ENCODE measurements at regions of chr17 and their contacts with region 1.

Region 1: DNA sequence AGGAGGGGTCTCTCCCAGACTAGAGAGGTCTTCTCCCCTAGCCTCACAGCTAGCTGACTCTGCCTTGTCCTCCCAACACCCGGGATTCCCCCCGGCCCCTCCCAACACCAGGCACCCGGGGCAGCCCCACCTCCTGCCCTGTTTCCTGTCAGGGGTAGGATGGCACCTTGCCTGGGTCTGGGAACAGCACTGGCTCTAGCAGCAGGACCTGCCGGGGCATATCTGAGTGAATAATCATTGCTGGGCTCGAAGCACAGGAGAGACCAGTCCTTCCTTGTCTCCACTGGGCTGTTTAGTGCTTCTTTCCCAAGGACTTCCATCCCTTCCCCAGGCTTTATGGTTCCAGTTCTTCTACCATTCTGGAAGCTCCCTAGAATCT is 25.7 kb downstream of the MINK1 start:
- DNase-seq: no peak
- ATAC-seq: no peak
- H3K4me3 ChIP-seq: no peak overlapping the region
- H3K27ac ChIP-seq: peak overlapping the region; percentile 51
- H3K4me1 ChIP-seq: peaks cover 66% of the 10 kb centered on the region
- H3K27me3 ChIP-seq: no peaks in the 10 kb centered on the region
- CTCF ChIP-seq: no peak
- EP300 ChIP-seq: no peak
- POLR2A ChIP-seq: no peak
- RAD21 ChIP-seq: no peak

Region 2: DNA sequence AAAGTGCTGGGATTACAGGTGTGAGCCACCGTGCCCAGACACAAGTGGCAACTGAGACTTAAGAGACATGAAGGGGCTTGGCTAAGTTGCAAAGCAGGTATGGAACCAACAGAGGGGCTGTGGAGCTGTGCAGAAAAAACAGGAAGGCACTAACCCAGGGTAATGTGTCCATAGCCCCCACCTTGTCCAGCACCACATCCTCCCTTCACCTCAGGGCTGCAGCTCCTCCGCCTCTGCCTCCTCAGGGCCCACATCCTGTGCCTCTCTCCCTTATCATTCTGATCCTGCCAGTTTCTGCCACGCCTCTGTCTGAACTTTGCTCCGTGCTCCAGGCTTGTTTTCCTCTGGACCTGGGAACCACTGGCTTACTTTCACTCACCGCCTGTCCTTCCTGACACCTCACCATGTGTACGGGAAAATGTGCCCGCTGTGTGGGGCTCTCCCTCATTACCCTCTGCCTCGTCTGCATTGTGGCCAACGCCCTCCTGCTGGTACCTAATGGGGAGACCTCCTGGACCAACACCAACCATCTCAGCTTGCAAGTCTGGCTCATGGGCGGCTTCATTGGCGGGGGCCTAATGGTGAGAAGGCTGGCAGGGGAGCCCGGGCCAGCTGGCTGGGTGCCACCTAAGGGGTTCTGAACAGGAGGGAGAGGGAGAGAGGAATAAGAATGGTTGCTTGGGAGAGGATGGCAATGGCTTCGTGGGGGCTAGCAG is 87.2 kb before region 1 on chr17 and contains the start of gene TM4SF5:
- CTCF ChIA-PET with region 1: no interaction called
- POLR2A ChIA-PET with region 1: no interaction called
- in situ Hi-C with region 1: no loop called
- intact Hi-C with region 1: no loop called
- DNase-seq: peak; percentile 95
- ATAC-seq: peak; percentile 96
- H3K4me3 ChIP-seq: peak within 1 kb of the TSS; percentile 65 to 83 (median 75)
- H3K27ac ChIP-seq: peak within 1 kb of the TSS; percentile 76
- H3K4me1 ChIP-seq: peaks cover 78% of the 10 kb centered on the region
- H3K27me3 ChIP-seq: no peaks in the 10 kb centered on the region; a peak in 1 of 5 replicates
- CTCF ChIP-seq: peak; percentile 41
- EP300 ChIP-seq: peak in 1 of 2 experiments; percentile 84; a peak in 2 of 4 replicates
- POLR2A ChIP-seq: peak; percentile 53 to 96
- RAD21 ChIP-seq: no peak
- total RNA-seq, gene TM4SF5: 15.6 and 30.1 TPM in 2 replicates

Region 3: GRCh38 chr17:4846635-4847390 is 12.1 kb before region 1 on chr17:
- CTCF ChIA-PET with region 1: no interaction called
- POLR2A ChIA-PET with region 1: interaction called, 11 read pairs
- in situ Hi-C with region 1: no loop called
- intact Hi-C with region 1: no loop called
- DNase-seq: peak; percentile 70
- ATAC-seq: peak; percentile 90
- H3K4me3 ChIP-seq: no peak overlapping the region
- H3K27ac ChIP-seq: peak overlapping the region; percentile 44
- H3K4me1 ChIP-seq: peaks cover 55% of the 10 kb centered on the region
- H3K27me3 ChIP-seq: no peaks in the 10 kb centered on the region
- CTCF ChIP-seq: no peak
- EP300 ChIP-seq: 0 out of 4 replicates have a peak, but pooled peaks of 1 of the 2 experiments have one; percentile 20
- POLR2A ChIP-seq: no peak
- RAD21 ChIP-seq: no peak

Region 4: GRCh38 chr17:5019475-5019956 is 160.6 kb after region 1 on chr17:
- CTCF ChIA-PET with region 1: no interaction called
- POLR2A ChIA-PET with region 1: no interaction called
- in situ Hi-C with region 1: no loop called
- intact Hi-C with region 1: no loop called
- DNase-seq: no peak
- ATAC-seq: peak; percentile 34
- H3K4me3 ChIP-seq: no peak overlapping the region
- H3K27ac ChIP-seq: no peak overlapping the region
- H3K4me1 ChIP-seq: no peaks in the 10 kb centered on the region
- H3K27me3 ChIP-seq: no peaks in the 10 kb centered on the region
- CTCF ChIP-seq: peak; percentile 47
- EP300 ChIP-seq: no peak
- POLR2A ChIP-seq: no peak
- RAD21 ChIP-seq: no peak

Measured in HepG2 (cell line).